Posterior vena cava (tissue), 2 donors: ENCODE measurements at regions of chr15 and their contacts with region 1.

Region 1: GRCh38 chr15:99303907-99304306 is 52.6 kb downstream of the LRRC28 start:
- DNase-seq: no peak

Region 2: DNA sequence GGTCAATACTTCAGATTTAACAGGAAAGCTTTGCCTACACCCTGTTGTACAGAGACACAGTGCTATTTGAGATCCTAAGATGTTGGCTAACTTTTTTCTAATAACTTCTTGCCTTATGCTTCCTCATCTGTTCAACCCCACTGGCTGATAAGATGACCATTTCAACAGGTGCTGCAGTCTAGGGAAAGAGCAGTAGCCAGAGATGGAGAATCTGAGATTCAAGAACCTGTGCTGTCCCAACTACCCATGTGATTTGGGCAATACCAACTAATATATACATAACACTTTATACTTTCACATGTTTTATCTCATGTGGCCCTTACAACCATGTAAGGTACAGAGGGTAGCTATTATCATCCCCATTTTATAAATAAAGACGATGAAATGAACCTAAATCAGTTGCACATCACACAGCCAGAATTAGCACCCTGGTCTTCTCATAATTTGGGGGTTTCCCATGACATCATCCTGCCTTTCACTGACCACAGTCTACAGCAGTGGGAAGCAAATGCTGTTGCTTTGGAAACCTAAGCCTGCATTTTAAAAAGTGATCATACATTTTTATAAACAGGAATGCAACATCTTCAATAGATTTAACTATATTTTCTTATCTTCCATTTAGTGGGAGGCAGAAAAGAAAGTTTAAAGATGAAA is 64.2 kb before region 1 on chr15:
- intact Hi-C with region 1: loop called in 1 of 2 experiments (anchors 2 kb)
- DNase-seq: no peak